Naive thymus-derived CD4-positive, alpha-beta T cell (primary cell): ENCODE measurements at regions of chr5 and their contacts with region 1.

Region 1: GRCh38 chr5:7856855-7857254 is 5.9 kb upstream of the CFAP90 start:
- DNase-seq: peak in 3 of 9 donors; percentile 14 to 40 (median 30)
- ATAC-seq: peak; percentile 51
- H3K4me3 ChIP-seq: no peak overlapping the region
- H3K4me3 Mint-ChIP-seq: no peak overlapping the region
- H3K27ac ChIP-seq: no peak overlapping the region
- H3K27ac Mint-ChIP-seq: peak overlapping the region in 1 of 9 donors; percentile 1
- H3K4me1 ChIP-seq: peaks cover 0 to 8% of the 10 kb centered on the region in 2 donors
- H3K4me1 Mint-ChIP-seq: peaks cover 22 to 38% (median 31%) of the 10 kb centered on the region in 7 donors
- H3K27me3 ChIP-seq: no peaks in the 10 kb centered on the region
- H3K27me3 Mint-ChIP-seq: peaks cover 0 to 9% (median 0%) of the 10 kb centered on the region in 5 donors

Region 2: DNA sequence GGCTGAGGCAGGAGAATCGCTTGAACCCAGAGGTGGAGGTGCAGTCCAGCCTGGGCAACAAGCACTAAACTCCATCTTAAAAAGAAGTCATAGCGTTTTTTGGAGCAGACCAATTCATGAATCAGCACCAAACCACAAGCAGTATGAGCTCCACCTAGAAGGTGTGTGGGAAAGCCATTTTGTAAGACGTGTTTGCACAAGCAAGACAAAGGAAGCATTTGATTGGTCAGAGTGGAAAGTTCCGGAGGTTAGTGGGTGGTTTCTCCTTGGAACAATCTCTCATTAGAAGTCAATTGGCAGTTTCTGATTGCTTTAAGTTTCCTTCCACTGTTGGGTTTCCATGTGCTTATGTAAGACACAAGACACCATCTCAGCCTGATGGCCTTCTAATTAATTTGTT is 1218.6 kb before region 1 on chr5:
- CTCF ChIA-PET with region 1: no interaction called
- POLR2A ChIA-PET with region 1: no interaction called
- intact Hi-C with region 1: no loop called
- DNase-seq: no peak
- ATAC-seq: no peak
- H3K4me3 ChIP-seq: no peak overlapping the region
- H3K4me3 Mint-ChIP-seq: no peak overlapping the region
- H3K27ac ChIP-seq: no peak overlapping the region
- H3K27ac Mint-ChIP-seq: no peak overlapping the region
- H3K4me1 ChIP-seq: no peaks in the 10 kb centered on the region
- H3K4me1 Mint-ChIP-seq: peaks cover 0 to 19% (median 6%) of the 10 kb centered on the region in 7 donors
- H3K27me3 ChIP-seq: no peaks in the 10 kb centered on the region
- H3K27me3 Mint-ChIP-seq: no peaks in the 10 kb centered on the region

Region 3: DNA sequence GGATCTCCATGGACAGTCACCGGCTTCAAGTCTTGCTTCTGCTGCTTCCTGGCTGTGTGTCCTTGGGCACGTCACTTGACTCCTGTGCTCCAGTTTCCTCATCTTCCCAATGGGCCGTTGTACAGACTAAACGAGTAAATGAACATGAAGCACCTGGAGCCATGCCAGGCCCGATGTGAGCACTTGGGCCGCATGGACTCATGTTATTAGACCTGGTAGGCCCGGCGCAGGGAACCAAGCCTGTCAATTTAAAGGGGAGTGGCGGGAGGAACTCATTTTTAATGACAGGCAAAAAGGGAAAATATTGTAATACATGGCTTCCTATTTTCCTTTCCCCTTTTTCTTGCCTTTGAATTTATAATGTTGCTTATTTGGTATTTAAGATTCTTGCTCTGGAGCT is 1096.2 kb before region 1 on chr5:
- CTCF ChIA-PET with region 1: no interaction called
- POLR2A ChIA-PET with region 1: no interaction called
- intact Hi-C with region 1: loop called in 1 of 2 experiments (anchors 5 kb)
- DNase-seq: no peak
- ATAC-seq: no peak
- H3K4me3 ChIP-seq: no peak overlapping the region
- H3K4me3 Mint-ChIP-seq: no peak overlapping the region
- H3K27ac ChIP-seq: no peak overlapping the region
- H3K27ac Mint-ChIP-seq: peak overlapping the region in 2 of 9 donors; percentile 14 to 25
- H3K4me1 ChIP-seq: no peaks in the 10 kb centered on the region
- H3K4me1 Mint-ChIP-seq: peaks cover 0 to 4% (median 3%) of the 10 kb centered on the region in 7 donors
- H3K27me3 ChIP-seq: no peaks in the 10 kb centered on the region
- H3K27me3 Mint-ChIP-seq: no peaks in the 10 kb centered on the region

Region 4: DNA sequence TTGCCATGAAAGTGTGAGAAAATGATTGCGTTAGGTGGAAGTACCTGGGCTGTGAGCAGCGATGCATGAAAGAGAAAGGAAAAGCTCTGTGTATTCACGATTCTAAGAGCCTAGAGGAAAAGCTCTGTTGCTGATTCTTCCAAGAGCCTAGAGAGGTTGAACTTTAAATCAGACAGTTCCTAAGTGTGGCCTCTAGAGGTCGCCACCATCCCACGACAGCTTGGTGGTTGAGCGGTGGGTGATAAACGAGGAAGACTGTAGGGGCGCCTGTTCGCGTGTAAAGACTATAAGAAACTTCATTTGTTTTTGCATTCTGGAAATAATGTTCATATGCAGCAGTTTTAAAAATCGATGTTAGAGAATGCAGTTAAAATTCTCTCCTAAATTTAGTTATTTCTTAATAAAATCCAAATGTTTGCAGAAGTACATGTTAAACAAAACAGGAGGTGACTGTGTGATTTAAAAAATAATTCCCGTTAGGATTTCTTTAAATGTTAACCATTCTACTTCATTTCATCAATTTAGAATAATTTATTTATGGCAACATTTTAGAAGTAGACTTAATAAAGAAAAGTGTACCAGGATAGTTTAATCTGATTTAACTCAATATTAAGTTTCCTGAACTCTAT is 1035.9 kb before region 1 on chr5:
- CTCF ChIA-PET with region 1: no interaction called
- POLR2A ChIA-PET with region 1: no interaction called
- intact Hi-C with region 1: loop called in 1 of 2 experiments (anchors 2 kb)
- DNase-seq: peak in 6 of 9 donors; percentile 16 to 64 (median 30)
- ATAC-seq: peak; percentile 75
- H3K4me3 ChIP-seq: no peak overlapping the region
- H3K4me3 Mint-ChIP-seq: no peak overlapping the region
- H3K27ac ChIP-seq: no peak overlapping the region
- H3K27ac Mint-ChIP-seq: no peak overlapping the region
- H3K4me1 ChIP-seq: no peaks in the 10 kb centered on the region
- H3K4me1 Mint-ChIP-seq: peaks cover 0 to 9% (median 0%) of the 10 kb centered on the region in 7 donors
- H3K27me3 ChIP-seq: peaks cover 0 to 7% of the 10 kb centered on the region in 2 donors
- H3K27me3 Mint-ChIP-seq: peaks cover 11 to 34% (median 27%) of the 10 kb centered on the region in 5 donors

Region 5: GRCh38 chr5:7745882-7746610 is 110.8 kb before region 1 on chr5:
- CTCF ChIA-PET with region 1: no interaction called
- POLR2A ChIA-PET with region 1: no interaction called
- intact Hi-C with region 1: loop called in 1 of 2 experiments (anchors 5 kb)
- DNase-seq: peak in 3 of 9 donors; percentile 3 to 39 (median 28)
- ATAC-seq: no peak
- H3K4me3 ChIP-seq: no peak overlapping the region
- H3K4me3 Mint-ChIP-seq: no peak overlapping the region
- H3K27ac ChIP-seq: no peak overlapping the region
- H3K27ac Mint-ChIP-seq: no peak overlapping the region
- H3K4me1 ChIP-seq: no peaks in the 10 kb centered on the region
- H3K4me1 Mint-ChIP-seq: peaks cover 0 to 3% (median 0%) of the 10 kb centered on the region in 7 donors
- H3K27me3 ChIP-seq: no peaks in the 10 kb centered on the region
- H3K27me3 Mint-ChIP-seq: peaks cover 1 to 11% (median 8%) of the 10 kb centered on the region in 5 donors

Region 6: DNA sequence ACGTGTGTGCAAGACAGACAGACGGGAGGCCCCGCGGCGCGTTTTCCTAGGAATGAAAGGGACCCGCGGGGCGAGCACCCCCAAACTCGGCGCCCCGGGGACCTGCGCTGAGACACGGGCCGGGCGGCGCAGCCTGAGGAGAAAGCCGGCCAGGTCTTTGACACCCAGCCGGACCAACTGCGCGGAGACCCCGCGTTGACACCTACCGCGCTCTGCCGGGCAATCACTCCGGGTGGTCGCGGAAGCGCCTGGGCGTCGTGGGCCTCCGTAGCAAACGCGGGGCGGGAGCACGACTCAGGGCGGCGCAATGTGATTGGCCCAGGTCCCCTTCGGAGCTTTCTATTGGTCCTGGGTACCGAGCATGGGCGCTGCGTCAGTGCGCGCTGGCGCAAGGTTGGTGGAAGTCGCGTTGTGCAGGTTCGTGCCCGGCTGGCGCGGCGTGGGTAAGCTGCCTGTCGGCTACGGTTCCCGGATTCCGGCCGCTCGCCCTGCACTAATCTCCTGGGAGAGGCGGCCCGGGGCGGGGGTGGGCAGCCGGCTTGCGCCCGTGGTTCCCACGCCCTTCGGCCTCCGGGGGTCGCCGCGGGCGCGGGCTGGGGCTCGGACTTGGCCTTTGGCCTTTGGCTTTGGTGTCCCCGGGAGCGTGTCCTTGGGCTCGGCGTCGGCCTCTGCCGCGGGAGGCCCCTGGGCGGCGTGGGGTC is 12.1 kb after region 1 on chr5 and contains the starts of genes FASTKD3 and MTRR:
- CTCF ChIA-PET with region 1: interaction called, 8 read pairs
- POLR2A ChIA-PET with region 1: interaction called, 9 read pairs
- intact Hi-C with region 1: loop called in 1 of 2 experiments (anchors 1 kb)
- DNase-seq: peak; percentile 75 to 90 (median 87)
- ATAC-seq: peak; percentile 100
- H3K4me3 ChIP-seq: peak within 1 kb of the TSS; percentile 75
- H3K4me3 Mint-ChIP-seq: peak within 1 kb of the TSS; percentile 90 to 100 (median 96)
- H3K27ac ChIP-seq: peak within 1 kb of the TSS; percentile 87
- H3K27ac Mint-ChIP-seq: peak within 1 kb of the TSS; percentile 85 to 97 (median 93)
- H3K4me1 ChIP-seq: peaks cover 38 to 43% of the 10 kb centered on the region in 2 donors
- H3K4me1 Mint-ChIP-seq: peaks cover 53 to 84% (median 82%) of the 10 kb centered on the region in 7 donors
- H3K27me3 ChIP-seq: no peaks in the 10 kb centered on the region
- H3K27me3 Mint-ChIP-seq: no peaks in the 10 kb centered on the region
- total RNA-seq, gene FASTKD3: 4.2 to 15.3 (median 10.0) TPM
- total RNA-seq, gene MTRR: 65.7 to 83.2 (median 70.2) TPM